ENCODE measurements at regions of chr1 and their contacts with region 1.

Region 1: DNA sequence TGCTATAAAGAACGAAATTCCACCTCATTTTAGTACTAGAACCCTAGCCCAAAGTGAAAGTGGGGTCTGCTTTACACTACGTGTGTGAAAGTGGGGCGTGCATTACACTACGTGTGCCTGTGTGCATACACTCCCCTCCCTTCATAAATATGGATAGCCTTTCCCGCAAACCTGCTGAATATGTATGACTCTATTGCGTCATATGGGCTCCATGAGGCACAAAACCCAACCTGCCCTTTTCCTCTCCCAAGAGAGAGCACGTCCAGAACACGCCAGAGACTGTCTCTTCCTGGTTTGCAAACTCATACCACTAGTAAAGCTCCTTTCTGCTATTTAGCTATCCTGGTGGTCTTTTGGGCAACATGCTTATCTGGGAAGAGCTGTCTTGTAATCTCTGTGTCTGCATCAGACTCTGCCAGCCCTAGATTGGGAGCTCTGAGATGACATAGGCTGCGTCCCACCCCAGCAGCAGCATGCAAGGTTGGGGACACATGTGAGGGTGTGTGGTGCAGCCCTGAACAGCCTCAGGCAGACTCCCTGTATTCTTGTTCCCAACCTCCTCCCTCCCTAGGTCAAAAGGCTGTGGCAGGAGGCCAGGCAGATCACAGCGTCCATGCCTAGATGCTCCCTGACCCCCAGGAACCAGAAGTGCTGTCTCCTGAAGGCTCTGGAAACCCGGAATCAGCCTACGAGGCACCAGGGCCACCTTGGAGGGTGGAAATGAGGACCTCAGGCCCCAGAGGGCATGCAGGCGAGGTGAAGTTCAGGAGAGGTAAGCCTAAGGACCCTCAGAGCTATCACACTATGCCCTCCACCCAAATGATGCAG is 12.3 kb upstream of the PADI1 start:
- DNase-seq: peak in 1 of 3 donors; percentile 19
- H3K4me3 ChIP-seq: no peak overlapping the region
- H3K27ac ChIP-seq: no peak overlapping the region
- H3K4me1 ChIP-seq: peaks cover 0 to 27% (median 11%) of the 10 kb centered on the region in 4 experiments
- H3K27me3 ChIP-seq: no peaks in the 10 kb centered on the region

Region 2: DNA sequence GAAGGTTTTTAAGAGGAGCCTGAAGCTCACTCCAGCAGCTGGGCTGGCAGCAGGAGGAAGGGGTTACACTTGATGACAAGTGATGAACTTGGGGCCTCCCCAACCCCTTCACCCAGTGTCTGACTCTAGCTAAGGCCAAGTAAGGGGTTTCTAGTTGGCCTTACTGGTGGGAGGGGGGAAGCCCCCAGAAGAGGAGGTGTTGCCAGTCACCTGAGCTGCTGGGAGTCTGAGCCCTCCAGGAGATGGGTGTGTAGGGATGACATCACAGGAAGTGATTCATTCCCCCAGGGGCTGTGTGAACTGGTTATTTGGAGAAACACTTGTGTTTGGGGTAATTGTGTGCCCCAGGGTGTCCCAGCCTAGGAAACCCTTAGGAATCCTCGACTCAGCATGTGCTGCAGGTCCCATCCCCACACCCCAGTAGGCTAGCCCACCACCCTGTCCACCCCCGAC is 15.4 kb after region 1 on chr1:
- CTCF ChIA-PET with region 1: interaction called, 12 read pairs
- POLR2A ChIA-PET with region 1: no interaction called
- DNase-seq: peak; percentile 70 to 87 (median 84)
- H3K4me3 ChIP-seq: peak overlapping the region in 1 of 7 experiments; percentile 16
- H3K27ac ChIP-seq: no peak overlapping the region
- H3K4me1 ChIP-seq: peaks cover 2 to 48% (median 33%) of the 10 kb centered on the region in 4 experiments
- H3K27me3 ChIP-seq: no peaks in the 10 kb centered on the region

Measured in common myeloid progenitor, CD34-positive (primary cell).